Astrocyte of the cerebellum (primary cell): ENCODE measurements at regions of chr4 and their contacts with region 1.

Region 1: DNA sequence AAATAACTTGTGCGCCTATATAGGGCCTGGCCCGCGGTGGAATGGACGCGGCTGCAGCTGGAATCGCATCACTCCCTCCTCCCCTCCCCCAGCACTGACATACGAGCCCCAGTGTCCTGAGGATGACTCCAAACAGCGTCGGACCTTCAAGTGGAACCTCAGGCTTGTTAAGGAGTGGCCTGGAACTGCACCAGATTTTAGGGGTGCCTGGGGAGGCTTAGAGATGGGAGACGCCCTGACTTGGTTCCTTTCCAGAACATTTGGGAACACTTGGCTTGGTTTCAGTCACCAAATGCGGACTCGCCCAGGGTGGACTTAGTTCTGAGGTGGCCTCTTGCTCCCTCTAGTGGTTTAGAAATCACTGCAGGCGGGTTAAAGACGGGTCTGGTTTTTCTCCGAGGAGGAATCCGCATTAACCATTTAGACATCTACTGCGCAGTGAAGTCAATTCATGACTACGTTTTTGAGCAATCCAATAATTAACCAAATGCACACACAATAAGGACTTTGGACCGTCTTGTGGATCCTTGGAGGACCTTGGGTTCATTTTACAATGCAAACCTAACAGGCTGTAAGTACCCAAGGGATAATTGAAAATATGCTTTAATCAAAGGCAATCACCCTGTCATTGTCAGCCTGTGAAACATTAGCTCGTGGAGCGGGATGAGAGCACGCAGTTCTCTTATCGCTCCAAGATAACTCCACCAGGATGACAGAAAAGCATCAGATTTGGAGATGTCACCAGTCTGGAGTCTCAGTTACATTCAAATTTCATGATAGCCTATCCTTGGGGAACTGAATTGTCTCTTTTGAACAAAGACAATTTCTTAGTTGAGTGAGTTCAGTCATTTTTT is 11.2 kb upstream of the PDGFRA start:
- DNase-seq: peak; percentile 55
- H3K4me3 ChIP-seq: peak overlapping the region; percentile 47
- CTCF ChIP-seq: peak; percentile 90

Region 2: DNA sequence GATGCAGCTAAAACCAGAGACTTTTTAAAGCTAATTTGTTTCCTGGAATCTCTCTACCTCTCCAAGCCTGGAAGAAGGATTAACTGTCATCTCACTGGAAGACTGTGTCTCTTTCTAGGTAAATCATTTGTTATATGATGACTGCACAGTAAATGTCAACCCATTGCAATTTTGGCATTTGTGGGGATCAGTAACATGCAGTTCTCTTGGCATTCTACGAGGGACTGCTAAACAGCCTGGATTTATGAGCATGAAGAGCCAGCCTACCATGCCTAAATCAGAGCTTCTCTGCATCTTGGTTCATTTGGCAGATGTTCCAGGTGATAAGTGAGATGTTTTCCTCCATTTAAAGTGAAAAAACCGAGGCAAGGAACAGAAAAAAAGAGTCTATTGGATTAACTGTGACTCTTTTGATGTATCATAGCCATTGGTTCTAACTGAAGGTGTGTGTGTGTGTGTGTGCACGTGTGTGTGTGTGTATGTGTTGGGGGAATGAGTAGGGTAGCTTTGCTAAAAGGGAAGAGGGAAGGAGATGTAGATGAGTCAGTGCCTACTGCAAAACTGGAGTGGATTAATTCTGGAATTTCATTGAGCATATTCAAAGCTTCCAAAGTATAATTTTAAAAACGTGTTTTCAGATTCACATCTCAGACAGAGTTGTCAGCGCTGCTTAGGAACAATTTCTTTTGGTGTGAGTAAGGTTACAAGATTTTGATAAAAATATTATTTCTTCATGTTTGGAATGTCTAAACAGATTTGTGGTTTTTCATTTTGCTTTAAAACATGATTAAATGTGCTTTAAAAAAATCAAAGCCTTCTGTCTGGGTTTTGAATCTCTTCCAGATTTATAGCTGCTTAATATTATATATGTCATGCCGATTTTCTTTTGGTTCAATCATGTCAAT is 503.4 kb before region 1 on chr4:
- in situ Hi-C with region 1: loop called (anchors 10 kb)
- DNase-seq: no peak
- H3K4me3 ChIP-seq: no peak overlapping the region
- CTCF ChIP-seq: no peak

Region 3: DNA sequence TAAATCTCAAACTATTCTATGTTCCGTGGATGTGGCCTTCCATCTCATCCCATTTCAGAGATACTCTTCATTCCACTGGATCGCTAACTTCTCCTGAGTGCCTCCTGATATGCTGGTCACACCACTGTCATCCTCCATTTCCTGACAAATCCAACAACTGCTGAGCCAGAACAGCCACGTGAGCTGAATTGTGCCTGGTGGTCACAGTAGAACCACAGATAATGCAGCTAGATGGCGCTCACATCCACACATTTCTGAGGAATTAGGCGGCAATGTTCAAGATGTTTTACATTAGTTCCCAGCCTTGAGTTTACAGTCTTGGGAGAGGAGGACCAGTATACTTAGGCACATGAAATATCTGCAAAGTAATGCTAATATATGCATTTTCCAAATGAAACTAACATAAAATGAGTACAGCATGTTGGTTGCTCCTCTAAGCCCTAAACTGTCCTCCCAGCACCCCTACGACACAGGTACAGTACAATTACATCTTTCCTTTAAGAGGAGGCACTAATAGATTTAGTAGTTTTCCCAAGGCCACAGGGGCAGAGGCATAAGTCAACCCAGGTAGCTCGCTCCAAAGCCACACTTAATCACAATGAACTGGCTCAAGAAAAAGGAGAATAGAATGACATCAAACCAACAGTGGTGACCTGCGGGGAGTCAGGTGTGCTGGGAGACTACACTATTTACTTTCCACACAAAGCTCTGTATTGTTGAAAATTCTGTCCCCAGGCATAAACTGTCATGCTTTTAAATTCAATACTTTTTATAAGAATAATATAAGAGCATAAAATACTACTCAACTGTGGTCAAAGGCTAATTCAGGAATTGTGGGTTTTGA is 287.7 kb before region 1 on chr4:
- in situ Hi-C with region 1: loop called (anchors 10 kb)
- DNase-seq: peak; percentile 83
- H3K4me3 ChIP-seq: no peak overlapping the region
- CTCF ChIP-seq: peak; percentile 71

Region 4: GRCh38 chr4:54185044-54185779 is 32.7 kb before region 1 on chr4:
- in situ Hi-C with region 1: no loop called
- DNase-seq: no peak
- H3K4me3 ChIP-seq: no peak overlapping the region
- CTCF ChIP-seq: no peak